ENCODE measurements at regions of chr19 and their contacts with region 1.

Region 1: GRCh38 chr19:4815426-4816201 is 15.9 kb downstream of the TICAM1 start:
- H3K4me3 ChIP-seq: no peak overlapping the region
- H3K27ac ChIP-seq: no peak overlapping the region
- H3K4me1 ChIP-seq: no peaks in the 10 kb centered on the region
- CTCF ChIP-seq: no peak

Region 2: GRCh38 chr19:4791170-4792018 is 24.2 kb before region 1 on chr19 and contains the start of gene FEM1A:
- CTCF ChIA-PET with region 1: interaction called, 14 read pairs
- POLR2A ChIA-PET with region 1: no interaction called
- H3K4me3 ChIP-seq: peak within 1 kb of the TSS; percentile 97
- H3K27ac ChIP-seq: peak within 1 kb of the TSS; percentile 88
- H3K4me1 ChIP-seq: no peaks in the 10 kb centered on the region; the same call in 1 of the 2 replicates
- CTCF ChIP-seq: peak; percentile 92

Region 3: DNA sequence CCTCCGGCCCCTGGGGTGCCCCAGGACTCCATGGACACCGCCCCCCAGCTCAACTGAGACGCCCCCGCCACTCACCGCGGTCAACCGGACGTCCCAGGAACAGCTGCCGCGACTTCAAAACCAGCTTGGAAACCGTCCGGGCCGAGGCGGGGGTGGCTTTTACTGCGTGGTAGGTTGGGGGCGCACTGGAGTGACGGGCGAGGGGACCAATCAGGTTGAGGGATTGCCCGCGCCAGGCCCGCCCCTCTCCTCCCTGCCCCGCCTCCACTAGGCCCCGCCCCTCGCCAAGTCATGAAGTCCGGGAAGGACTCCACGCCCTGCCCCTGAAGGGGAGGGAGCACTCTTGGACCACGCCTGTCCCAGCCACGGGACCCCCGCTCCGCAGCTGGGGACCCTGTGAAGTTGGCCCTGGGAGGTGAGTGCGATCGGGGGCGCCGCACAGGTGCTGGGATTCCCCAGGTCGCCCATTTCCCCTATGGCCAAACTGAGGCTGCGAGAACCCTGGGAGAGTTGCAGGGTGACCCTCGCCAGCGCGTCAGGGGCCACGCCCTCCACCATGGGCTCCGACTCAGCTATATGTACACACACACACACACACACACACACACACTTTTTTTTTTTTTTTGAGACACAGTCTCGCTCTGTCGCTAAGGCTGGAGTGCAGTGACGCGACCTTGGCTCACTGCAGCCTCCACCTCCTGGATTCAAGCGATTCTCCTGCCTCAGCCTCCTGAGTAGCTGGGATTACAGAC is 52.1 kb after region 1 on chr19 and contains the start of gene PLIN3:
- CTCF ChIA-PET with region 1: interaction called, 16 read pairs
- POLR2A ChIA-PET with region 1: interaction called, 3 read pairs
- H3K4me3 ChIP-seq: peak within 1 kb of the TSS; percentile 63
- H3K27ac ChIP-seq: no peak within 1 kb of the TSS
- H3K4me1 ChIP-seq: peaks cover 3% of the 10 kb centered on the region; the same call in 1 of the 2 replicates
- CTCF ChIP-seq: no peak

Region 4: DNA sequence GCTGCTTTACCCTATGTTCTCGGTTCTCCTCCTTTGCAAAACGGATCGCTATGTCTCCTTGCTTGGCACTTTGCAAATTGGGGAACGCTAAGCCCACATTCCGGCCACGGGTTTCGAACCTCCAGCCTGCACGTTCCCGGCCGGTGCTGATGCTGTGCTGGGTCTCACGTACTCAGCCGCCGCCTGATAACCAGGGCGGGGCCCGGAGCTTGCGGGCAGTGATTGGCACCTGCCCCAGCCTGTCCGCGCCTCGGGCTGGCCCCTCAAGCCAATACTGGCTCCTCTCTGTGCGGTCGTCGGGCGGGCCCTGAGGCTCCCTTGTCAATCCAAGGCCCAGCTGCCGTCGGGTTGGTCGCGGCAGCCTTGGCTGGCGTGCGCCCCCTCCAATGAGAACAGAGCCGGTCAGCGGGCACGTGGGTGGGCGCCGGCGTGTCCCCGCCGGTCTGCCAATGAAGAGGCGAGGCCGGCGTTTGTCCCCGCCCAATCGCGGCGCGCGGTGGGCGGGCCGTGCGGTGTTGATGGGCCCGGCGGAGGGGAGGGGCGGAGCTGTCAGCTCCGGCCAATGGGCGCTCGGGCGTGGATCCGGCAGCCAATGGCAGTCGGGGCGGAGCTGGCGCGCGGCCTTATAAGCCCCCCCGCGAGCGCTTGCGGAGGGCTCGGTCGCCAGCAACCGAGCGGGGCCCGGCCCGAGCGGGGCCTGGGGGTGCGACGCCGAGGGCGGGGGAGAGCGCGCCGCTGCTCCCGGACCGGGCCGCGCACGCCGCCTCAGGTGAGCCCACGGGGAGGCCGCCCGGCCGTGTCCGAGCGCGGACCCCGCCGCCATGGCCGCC is 153.1 kb after region 1 on chr19 and contains the start of gene KDM4B:
- CTCF ChIA-PET with region 1: interaction called, 11 read pairs
- POLR2A ChIA-PET with region 1: interaction called, 3 read pairs
- H3K4me3 ChIP-seq: peak within 1 kb of the TSS; percentile 71
- H3K27ac ChIP-seq: peak within 1 kb of the TSS; percentile 79; the same call in 1 of the 2 replicates
- H3K4me1 ChIP-seq: peaks cover 6% of the 10 kb centered on the region
- CTCF ChIP-seq: no peak

Region 5: GRCh38 chr19:5250127-5250659 is 434.6 kb after region 1 on chr19:
- CTCF ChIA-PET with region 1: no interaction called
- POLR2A ChIA-PET with region 1: interaction called, 10 read pairs
- H3K4me3 ChIP-seq: no peak overlapping the region
- H3K27ac ChIP-seq: no peak overlapping the region
- H3K4me1 ChIP-seq: no peaks in the 10 kb centered on the region
- CTCF ChIP-seq: no peak